ENCODE measurements at regions of chr2 and their contacts with region 1.

Region 1: DNA sequence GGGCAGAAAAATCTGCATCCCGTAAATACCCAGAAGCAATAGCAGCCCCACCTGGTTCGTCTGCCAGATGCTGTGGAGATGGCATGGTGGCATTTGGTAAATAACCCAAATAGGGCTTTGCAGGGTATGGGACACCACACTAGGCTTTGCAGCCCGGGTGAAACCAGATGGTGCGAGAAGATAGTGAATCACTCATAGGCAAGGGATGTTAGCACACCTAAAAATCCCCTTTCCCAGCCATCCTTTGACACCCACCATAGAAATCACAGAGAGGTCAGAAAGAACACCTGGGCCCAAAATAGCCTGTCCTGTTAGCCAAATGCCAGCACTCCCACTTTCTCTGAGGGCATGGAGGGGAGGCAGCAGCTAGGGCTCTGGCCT is 47.6 kb downstream of the BCL11A start:
- DNase-seq: no peak
- H3K4me3 ChIP-seq: no peak overlapping the region
- H3K27ac ChIP-seq: no peak overlapping the region
- H3K4me1 ChIP-seq: peaks cover 30% of the 10 kb centered on the region
- CTCF ChIP-seq: no peak

Region 2: DNA sequence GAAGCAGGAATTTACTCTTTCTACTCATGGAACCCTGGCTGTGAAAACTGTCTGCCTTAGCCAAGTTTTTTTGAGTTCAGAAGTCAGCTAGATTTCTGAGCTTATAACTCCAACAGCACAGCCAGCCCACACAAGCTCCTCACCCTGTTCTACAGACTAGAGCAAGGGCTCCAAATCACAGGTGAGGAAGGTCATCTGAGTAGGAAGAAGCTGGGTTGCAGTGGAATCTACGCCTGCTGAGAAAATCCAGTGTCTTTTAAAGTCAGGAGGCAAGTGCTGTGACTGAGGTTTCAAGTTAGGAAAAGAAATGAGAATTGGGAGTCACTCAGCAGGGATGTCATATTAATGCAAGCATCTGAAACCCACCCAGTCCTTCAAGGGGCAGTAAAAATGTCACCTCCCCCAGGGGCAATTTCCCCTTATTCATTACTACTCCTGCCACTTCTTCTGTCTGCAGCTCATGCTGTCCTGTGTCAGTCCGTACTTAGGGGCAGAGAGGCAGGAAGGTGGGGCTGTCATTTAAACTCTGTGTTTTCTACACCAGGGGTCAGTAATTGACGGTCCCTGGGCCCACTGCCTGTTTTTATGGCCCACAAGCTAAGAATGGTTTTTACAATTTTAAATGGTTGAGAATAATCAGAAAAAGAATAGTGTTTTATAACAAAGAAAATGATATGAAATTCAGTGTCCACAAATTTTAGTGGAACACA is 503.6 kb before region 1 on chr2:
- CTCF ChIA-PET with region 1: no interaction called
- POLR2A ChIA-PET with region 1: no interaction called
- intact Hi-C with region 1: no loop called
- DNase-seq: peak; percentile 20
- H3K4me3 ChIP-seq: no peak overlapping the region
- H3K27ac ChIP-seq: no peak overlapping the region
- H3K4me1 ChIP-seq: peaks cover 4% of the 10 kb centered on the region
- CTCF ChIP-seq: peak; percentile 51

Region 3: GRCh38 chr2:60495041-60495625 is 10.7 kb before region 1 on chr2:
- CTCF ChIA-PET with region 1: interaction called, 3 read pairs
- POLR2A ChIA-PET with region 1: interaction called, 10 read pairs
- intact Hi-C with region 1: no loop called
- DNase-seq: no peak
- H3K4me3 ChIP-seq: no peak overlapping the region
- H3K27ac ChIP-seq: no peak overlapping the region
- H3K4me1 ChIP-seq: peaks cover 34% of the 10 kb centered on the region
- CTCF ChIP-seq: no peak

Region 4: GRCh38 chr2:60602828-60603532 is 97.1 kb after region 1 on chr2:
- CTCF ChIA-PET with region 1: no interaction called
- POLR2A ChIA-PET with region 1: no interaction called
- intact Hi-C with region 1: no loop called
- DNase-seq: no peak
- H3K4me3 ChIP-seq: no peak overlapping the region
- H3K27ac ChIP-seq: no peak overlapping the region
- H3K4me1 ChIP-seq: peaks cover 15% of the 10 kb centered on the region
- CTCF ChIP-seq: no peak

Measured in OCI-LY7 (cell line).